ENCODE measurements at regions of chr6 and their contacts with region 1.

Region 1: GRCh38 chr6:10555625-10556309 is 34.6 kb downstream of the GCNT2 start:
- DNase-seq: peak; percentile 82
- H3K4me3 ChIP-seq: peak overlapping the region; percentile 19 to 57 (median 24)
- H3K27ac ChIP-seq: peak overlapping the region; percentile 74
- H3K4me1 ChIP-seq: peaks cover 25% of the 10 kb centered on the region
- H3K27me3 ChIP-seq: no peaks in the 10 kb centered on the region
- CTCF ChIP-seq: no peak
- POLR2A ChIP-seq: no peak

Region 2: GRCh38 chr6:10465629-10466504 is 89.9 kb before region 1 on chr6:
- CTCF ChIA-PET with region 1: no interaction called
- POLR2A ChIA-PET with region 1: no interaction called
- dilution Hi-C with region 1: no loop called
- intact Hi-C with region 1: no loop called
- DNase-seq: peak; percentile 39
- H3K4me3 ChIP-seq: no peak overlapping the region
- H3K27ac ChIP-seq: no peak overlapping the region
- H3K4me1 ChIP-seq: no peaks in the 10 kb centered on the region
- H3K27me3 ChIP-seq: no peaks in the 10 kb centered on the region
- CTCF ChIP-seq: peak; percentile 11 to 62
- POLR2A ChIP-seq: no peak

Region 3: DNA sequence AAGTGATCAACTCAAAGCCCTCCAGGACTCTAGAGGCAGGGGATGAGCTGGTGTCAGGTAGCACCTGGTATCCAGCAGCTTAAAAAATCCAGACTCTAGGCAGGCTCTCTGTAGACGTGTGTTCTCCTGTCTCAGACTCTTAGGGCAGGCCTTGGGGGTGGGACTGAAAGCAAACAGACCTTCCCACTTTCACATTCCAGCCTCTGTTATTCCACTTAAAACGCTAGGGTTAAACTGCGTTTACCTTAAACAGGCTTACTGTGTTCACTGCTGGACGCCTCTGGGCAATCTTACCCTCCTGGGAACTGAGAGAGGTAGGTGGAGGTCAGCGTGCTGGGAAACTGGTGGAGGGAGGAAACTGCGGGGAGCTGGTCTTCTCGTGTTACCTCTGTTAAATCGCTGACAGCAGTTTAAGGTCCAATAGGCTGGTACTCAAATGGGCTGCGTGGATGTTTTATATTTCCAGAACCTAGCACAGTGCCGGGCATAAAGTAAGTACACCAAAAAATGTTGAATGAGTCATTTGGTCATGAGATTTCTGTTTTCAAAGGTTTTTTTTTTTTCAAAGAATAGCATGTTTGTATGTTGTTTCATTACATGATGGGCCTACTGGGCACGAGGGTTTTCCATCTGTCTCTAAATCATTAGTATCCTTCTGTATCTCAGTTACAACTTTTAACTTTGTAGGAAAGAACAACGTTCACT is 34.5 kb before region 1 on chr6 and contains the start of gene GCNT2:
- CTCF ChIA-PET with region 1: interaction called, 6 read pairs
- POLR2A ChIA-PET with region 1: interaction called, 5 read pairs
- dilution Hi-C with region 1: no loop called
- intact Hi-C with region 1: loop called (anchors 2 kb)
- DNase-seq: peak; percentile 66
- H3K4me3 ChIP-seq: peak within 1 kb of the TSS in 2 of 3 experiments; percentile 10 to 53
- H3K27ac ChIP-seq: peak within 1 kb of the TSS; percentile 85
- H3K4me1 ChIP-seq: peaks cover 38% of the 10 kb centered on the region
- H3K27me3 ChIP-seq: no peaks in the 10 kb centered on the region
- CTCF ChIP-seq: no peak
- POLR2A ChIP-seq: peak; percentile 43
- total RNA-seq, gene GCNT2: 10.9 and 11.4 TPM in 2 replicates

Region 4: DNA sequence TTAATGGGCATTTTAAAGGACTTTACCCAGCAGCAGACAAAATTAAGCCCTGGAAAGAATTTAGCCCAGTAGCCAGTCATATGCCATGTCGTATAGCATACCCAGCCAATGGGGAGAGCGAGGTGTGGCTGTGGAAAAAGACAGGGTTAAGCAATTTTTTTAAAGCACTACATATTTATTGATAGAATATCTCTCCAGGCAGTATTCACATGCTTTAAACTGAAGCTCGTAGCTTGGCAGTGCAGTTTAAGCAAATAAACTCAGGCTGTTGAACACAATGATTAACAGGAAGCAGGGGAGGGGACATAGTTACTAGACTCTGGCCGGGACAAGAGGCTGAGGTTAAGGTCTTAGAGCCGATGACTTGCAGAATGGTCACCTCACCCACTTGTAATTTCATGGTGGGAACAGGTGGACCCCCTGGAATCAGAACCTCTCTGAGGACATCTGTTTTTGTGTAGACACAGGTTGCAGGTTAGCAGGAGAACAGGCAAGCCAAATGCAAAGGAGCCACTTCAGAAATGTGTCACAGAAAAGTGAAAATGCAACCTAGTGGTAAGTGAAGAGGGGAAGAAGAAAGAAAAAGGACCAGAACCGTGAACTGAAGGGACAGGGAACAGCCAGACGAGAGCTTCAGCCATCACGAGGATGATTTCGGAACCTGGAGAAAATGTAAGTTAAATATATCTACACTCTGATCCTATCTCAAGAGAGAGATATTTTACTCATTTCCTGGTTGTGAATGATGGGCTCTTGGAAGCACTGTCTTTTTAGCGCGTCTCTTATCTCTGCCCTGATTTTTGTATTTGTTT is 27.4 kb before region 1 on chr6:
- CTCF ChIA-PET with region 1: interaction called, 4 read pairs
- POLR2A ChIA-PET with region 1: interaction called, 5 read pairs
- dilution Hi-C with region 1: no loop called
- intact Hi-C with region 1: loop called (anchors 1 kb)
- DNase-seq: peak; percentile 85
- H3K4me3 ChIP-seq: peak overlapping the region; percentile 42 to 72 (median 61)
- H3K27ac ChIP-seq: peak overlapping the region; percentile 93
- H3K4me1 ChIP-seq: peaks cover 29% of the 10 kb centered on the region
- H3K27me3 ChIP-seq: no peaks in the 10 kb centered on the region
- CTCF ChIP-seq: no peak
- POLR2A ChIP-seq: no peak

Measured in endothelial cell of umbilical vein (primary cell).